Common myeloid progenitor, CD34-positive (primary cell): ENCODE measurements at regions of chr12 and their contacts with region 1.

Region 1: GRCh38 chr12:70576346-70577282 is 60.6 kb downstream of the PTPRB start:
- DNase-seq: peak; percentile 61 to 68 (median 65)
- H3K4me3 ChIP-seq: no peak overlapping the region
- H3K27ac ChIP-seq: no peak overlapping the region
- H3K4me1 ChIP-seq: no peaks in the 10 kb centered on the region
- H3K27me3 ChIP-seq: no peaks in the 10 kb centered on the region

Region 2: DNA sequence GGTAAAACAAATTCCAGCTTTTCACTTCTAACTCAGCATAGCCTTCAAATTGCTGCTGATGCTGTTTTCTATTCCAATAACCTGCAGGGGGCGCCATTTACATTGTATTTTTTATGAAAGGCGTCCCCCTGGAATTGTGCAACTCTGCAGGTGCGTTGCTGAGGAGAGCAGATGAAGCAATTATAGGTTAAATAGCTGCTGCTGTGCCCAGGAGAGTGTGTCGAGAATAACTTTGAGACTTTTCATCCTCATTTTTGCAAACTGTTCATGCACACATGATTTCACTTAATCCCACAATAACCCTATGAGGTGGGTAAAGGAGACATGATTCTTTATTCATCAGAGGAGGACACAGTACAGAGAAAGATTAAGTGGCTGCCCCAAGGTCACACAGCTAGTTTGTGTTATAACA is 675.9 kb before region 1 on chr12:
- CTCF ChIA-PET with region 1: interaction called, 48 read pairs
- POLR2A ChIA-PET with region 1: no interaction called
- DNase-seq: peak; percentile 57 to 80 (median 72)
- H3K4me3 ChIP-seq: no peak overlapping the region
- H3K27ac ChIP-seq: no peak overlapping the region
- H3K4me1 ChIP-seq: peaks cover 0 to 2% (median 0%) of the 10 kb centered on the region in 4 experiments
- H3K27me3 ChIP-seq: no peaks in the 10 kb centered on the region

Region 3: DNA sequence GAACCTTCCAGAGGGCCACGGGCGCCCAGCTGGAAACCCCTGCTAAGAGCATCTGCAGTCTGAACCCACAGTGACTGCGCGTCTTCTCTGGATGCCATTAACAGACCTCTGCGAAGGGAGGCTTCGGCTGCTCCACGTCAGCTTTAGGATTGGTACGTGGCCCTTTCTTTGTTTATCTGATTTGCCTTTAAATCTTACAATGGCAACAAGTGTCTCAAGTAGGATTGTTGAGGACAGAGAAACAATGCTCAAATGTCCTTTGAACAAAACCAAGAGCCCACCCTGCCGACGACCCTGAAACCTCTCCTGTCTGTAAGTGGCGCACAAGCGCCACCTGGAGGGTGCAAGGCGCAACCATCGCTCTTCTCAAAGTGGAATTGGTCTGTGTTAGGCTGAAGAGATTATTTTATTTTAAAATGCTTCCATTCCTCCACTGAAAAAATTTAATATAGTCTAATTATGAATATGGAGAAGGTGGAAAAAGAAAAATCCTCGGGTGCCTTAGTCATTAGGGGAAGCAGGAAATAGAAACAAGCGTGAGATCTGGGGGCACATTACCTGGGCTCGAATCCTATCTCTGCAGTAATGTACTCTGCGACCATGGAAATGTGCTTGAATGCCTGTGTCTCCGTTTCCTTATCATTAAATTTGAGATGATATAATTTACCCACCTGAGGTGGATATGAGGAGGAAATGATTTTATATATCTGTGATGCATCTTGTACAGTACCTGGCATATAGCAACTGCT is 143.2 kb after region 1 on chr12:
- CTCF ChIA-PET with region 1: interaction called, 15 read pairs
- POLR2A ChIA-PET with region 1: no interaction called
- DNase-seq: peak; percentile 64 to 88 (median 85)
- H3K4me3 ChIP-seq: peak overlapping the region in 6 of 7 experiments; percentile 45 to 83 (median 64)
- H3K27ac ChIP-seq: no peak overlapping the region
- H3K4me1 ChIP-seq: peaks cover 0 to 33% (median 17%) of the 10 kb centered on the region in 4 experiments
- H3K27me3 ChIP-seq: peaks cover 0 to 6% (median 0%) of the 10 kb centered on the region in 5 experiments

Region 4: DNA sequence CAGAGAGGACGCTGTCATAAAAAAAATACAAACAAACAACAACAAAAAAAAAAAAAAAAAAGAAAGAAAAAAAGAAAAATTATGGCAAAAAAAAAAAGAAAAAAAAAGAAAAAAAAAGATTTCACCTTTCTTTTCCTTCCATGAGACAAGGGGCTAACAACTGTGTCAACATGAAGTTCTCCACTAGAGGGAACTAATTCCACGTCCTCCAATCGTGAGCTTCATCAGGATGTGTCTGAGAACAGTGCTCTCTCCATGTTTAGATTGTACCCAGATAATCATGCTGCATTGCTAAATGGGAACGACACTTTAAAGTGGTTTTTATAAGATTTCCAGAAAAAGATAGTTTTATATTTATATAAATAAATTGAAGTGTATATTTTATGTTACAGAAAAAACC is 156.8 kb after region 1 on chr12:
- CTCF ChIA-PET with region 1: no interaction called
- POLR2A ChIA-PET with region 1: no interaction called
- DNase-seq: peak; percentile 63 to 73 (median 70)
- H3K4me3 ChIP-seq: no peak overlapping the region
- H3K27ac ChIP-seq: no peak overlapping the region
- H3K4me1 ChIP-seq: no peaks in the 10 kb centered on the region
- H3K27me3 ChIP-seq: peaks cover 0 to 1% (median 0%) of the 10 kb centered on the region in 5 experiments